H1 (cell line): ENCODE measurements at regions of chr20 and their contacts with region 1.

Region 1: DNA sequence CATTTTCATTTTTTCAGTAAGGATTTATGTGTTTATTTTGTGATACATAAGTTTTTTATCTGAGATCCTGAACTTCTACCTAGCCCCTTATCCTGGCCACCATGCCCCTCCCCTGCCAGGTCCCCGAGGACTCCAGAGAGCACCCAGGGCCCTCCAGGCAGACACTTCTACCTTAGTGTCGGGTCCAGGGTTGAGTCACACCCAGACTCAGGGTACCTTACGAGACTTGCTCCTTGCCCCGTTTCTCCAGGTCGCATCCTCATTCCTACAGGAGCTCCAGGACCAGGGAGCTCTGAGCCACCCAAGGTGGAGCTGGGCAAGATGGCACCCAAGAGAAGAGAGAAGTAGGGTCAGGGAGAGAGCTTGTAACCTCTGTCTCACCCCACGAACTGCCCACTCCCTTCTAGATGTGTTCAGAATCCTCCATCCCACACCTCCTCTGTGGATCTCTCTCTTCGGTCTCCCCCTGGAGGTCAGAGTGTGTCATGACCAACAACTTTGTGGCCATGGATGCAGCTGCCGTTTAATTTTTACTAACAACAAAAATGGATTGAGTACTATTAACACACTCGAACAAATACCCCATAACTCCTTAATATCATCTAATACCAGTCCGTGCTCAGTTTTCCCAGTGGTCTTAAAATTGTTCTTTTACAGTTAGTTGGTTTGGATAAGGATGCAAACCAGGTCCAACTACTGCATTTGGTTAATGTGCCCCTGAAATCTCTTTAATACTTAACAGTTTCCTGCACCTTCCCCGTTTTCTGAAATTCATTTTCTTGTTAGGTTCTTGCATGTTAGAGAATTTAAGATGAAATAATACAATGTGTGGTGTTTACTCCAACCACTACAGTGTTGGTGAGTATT is 130.6 kb upstream of the INSM1 start:
- DNase-seq: peak in 1 of 2 experiments; percentile 65
- H3K4me3 ChIP-seq: no peak overlapping the region
- H3K27ac ChIP-seq: no peak overlapping the region
- H3K4me1 ChIP-seq: no peaks in the 10 kb centered on the region
- H3K27me3 ChIP-seq: no peaks in the 10 kb centered on the region; a peak in 1 of 7 replicates
- CTCF ChIP-seq: peak; percentile 64 to 77 (median 77)
- EP300 ChIP-seq: no peak
- POLR2A ChIP-seq: no peak
- RAD21 ChIP-seq: peak; percentile 76 to 82

Region 2: DNA sequence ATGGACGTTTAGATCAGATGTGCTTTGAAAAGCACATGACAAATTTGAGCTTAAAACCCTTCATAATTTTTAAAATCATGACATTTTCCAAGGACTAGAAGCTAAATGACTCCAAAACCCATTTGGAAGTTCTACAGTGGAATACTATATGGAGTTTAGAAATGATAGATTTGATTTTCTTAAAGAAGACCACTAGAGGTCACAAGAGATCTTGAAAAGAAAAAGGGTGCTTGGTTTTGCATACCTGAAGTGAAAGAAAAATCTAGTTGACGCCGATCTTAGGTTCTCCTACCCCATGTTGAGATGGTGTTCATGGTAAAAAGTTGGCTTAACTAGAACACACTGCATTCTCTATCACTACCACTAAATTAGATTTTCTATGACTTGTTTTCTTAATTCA is 153.5 kb before region 1 on chr20:
- CTCF ChIA-PET with region 1: interaction called, 17 read pairs
- POLR2A ChIA-PET with region 1: no interaction called
- DNase-seq: no peak
- H3K4me3 ChIP-seq: no peak overlapping the region
- H3K27ac ChIP-seq: no peak overlapping the region
- H3K4me1 ChIP-seq: peaks cover 0 to 6% (median 5%) of the 10 kb centered on the region in 4 experiments; a peak in 3 of 7 replicates
- H3K27me3 ChIP-seq: no peaks in the 10 kb centered on the region
- CTCF ChIP-seq: peak in 2 of 3 experiments; percentile 24 to 41; a peak in 2 of 4 replicates
- EP300 ChIP-seq: no peak
- POLR2A ChIP-seq: no peak
- RAD21 ChIP-seq: peak; percentile 73 to 77

Region 3: DNA sequence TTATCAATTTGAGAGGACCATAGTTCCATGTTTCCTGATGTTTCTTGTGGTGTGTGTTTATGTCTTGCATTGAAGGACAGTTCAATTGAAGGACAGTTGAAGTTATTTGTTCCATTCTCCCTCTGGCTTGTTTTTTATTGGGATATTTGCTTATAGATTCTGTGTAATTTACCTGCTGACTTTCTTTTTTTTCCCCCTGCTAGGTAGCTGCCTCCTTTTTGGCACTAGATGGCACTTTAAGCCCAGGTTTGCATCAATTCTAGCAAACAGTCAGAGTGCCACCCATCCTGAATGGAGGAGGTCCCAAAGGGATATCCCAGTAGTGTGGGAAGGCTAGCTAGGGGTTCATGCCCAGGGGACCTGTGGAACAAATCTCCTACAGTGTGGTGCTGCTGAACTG is 106.9 kb before region 1 on chr20:
- CTCF ChIA-PET with region 1: interaction called, 10 read pairs
- POLR2A ChIA-PET with region 1: no interaction called
- DNase-seq: no peak
- H3K4me3 ChIP-seq: no peak overlapping the region
- H3K27ac ChIP-seq: no peak overlapping the region
- H3K4me1 ChIP-seq: no peaks in the 10 kb centered on the region
- H3K27me3 ChIP-seq: no peaks in the 10 kb centered on the region
- CTCF ChIP-seq: peak in 2 of 3 experiments; percentile 75; a peak in 3 of 4 replicates
- EP300 ChIP-seq: no peak
- POLR2A ChIP-seq: no peak
- RAD21 ChIP-seq: peak; percentile 91 to 92

Region 4: GRCh38 chr20:20184149-20184548 is 53.2 kb before region 1 on chr20:
- CTCF ChIA-PET with region 1: interaction called, 12 read pairs
- POLR2A ChIA-PET with region 1: no interaction called
- DNase-seq: no peak
- H3K4me3 ChIP-seq: no peak overlapping the region
- H3K27ac ChIP-seq: no peak overlapping the region
- H3K4me1 ChIP-seq: 0 out of 7 replicates have a peak, but pooled peaks cover 0 to 2% (median 0%) of the 10 kb centered on the region in 4 experiments
- H3K27me3 ChIP-seq: no peaks in the 10 kb centered on the region
- CTCF ChIP-seq: peak in 2 of 3 experiments; percentile 50 to 52; a peak in 3 of 4 replicates
- EP300 ChIP-seq: no peak
- POLR2A ChIP-seq: no peak
- RAD21 ChIP-seq: peak; percentile 37 to 57; a peak in 3 of 4 replicates

Region 5: GRCh38 chr20:20217623-20218022 is 19.7 kb before region 1 on chr20:
- CTCF ChIA-PET with region 1: interaction called, 17 read pairs
- POLR2A ChIA-PET with region 1: no interaction called
- DNase-seq: no peak
- H3K4me3 ChIP-seq: no peak overlapping the region
- H3K27ac ChIP-seq: no peak overlapping the region
- H3K4me1 ChIP-seq: no peaks in the 10 kb centered on the region
- H3K27me3 ChIP-seq: no peaks in the 10 kb centered on the region
- CTCF ChIP-seq: no peak
- EP300 ChIP-seq: no peak
- POLR2A ChIP-seq: no peak
- RAD21 ChIP-seq: no peak

Region 6: DNA sequence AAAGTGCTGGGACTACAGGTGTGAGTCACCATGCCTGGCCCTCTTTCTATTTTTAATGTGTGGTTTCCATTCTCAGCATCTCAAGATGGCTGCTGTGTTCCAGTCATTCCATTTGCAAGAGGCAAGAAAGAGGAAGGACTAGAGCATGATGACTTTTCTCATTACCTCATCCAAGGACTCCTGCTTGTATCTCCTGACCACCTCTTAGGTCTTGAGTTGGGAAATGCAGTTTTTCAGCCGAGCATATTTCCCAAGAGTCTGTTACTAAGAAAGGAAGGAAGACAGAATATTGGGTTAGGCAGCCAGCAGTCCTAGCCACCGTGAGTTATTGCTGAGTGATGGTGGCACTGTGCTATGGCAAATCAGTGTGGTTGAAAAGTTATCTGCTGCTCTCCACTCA is 22.2 kb after region 1 on chr20:
- CTCF ChIA-PET with region 1: interaction called, 88 read pairs
- POLR2A ChIA-PET with region 1: interaction called, 3 read pairs
- DNase-seq: no peak
- H3K4me3 ChIP-seq: no peak overlapping the region
- H3K27ac ChIP-seq: no peak overlapping the region
- H3K4me1 ChIP-seq: no peaks in the 10 kb centered on the region
- H3K27me3 ChIP-seq: no peaks in the 10 kb centered on the region
- CTCF ChIP-seq: no peak
- EP300 ChIP-seq: no peak
- POLR2A ChIP-seq: no peak
- RAD21 ChIP-seq: no peak

Region 7: GRCh38 chr20:20286061-20286460 is 48.7 kb after region 1 on chr20:
- CTCF ChIA-PET with region 1: no interaction called
- POLR2A ChIA-PET with region 1: no interaction called
- DNase-seq: no peak
- H3K4me3 ChIP-seq: no peak overlapping the region
- H3K27ac ChIP-seq: no peak overlapping the region
- H3K4me1 ChIP-seq: no peaks in the 10 kb centered on the region
- H3K27me3 ChIP-seq: no peaks in the 10 kb centered on the region
- CTCF ChIP-seq: no peak
- EP300 ChIP-seq: no peak
- POLR2A ChIP-seq: no peak
- RAD21 ChIP-seq: no peak

Region 8: DNA sequence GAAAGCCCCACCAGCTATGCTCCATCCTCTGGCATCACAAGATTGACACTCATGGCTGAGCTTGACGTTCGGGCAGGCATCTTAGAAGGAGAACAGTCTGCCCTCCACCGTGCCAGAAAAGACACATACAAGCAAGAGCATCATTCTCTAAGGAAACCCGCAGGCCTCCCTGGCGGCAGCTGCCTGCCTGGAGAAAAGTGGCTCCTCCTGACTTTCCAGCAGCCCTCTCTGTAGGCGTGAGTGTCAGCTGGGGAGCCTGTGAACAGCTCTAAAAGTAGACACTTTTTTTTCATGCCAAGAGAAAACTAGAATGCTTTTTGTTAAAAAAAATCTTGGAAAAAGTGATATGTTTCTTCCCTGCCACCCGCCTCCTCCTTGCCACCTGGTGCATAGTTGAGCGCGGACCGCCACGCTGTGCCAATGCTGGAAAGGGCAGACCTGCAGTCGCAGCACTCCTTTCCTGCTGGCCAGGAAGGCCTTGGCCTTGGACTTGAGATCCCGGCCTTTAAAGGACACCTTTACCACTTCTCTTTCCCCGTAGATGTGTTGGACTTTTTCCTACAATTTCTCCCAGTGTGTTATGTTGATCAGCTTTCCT is 100.9 kb after region 1 on chr20:
- CTCF ChIA-PET with region 1: no interaction called
- POLR2A ChIA-PET with region 1: no interaction called
- DNase-seq: no peak
- H3K4me3 ChIP-seq: no peak overlapping the region
- H3K27ac ChIP-seq: no peak overlapping the region
- H3K4me1 ChIP-seq: no peaks in the 10 kb centered on the region
- H3K27me3 ChIP-seq: no peaks in the 10 kb centered on the region
- CTCF ChIP-seq: no peak
- EP300 ChIP-seq: no peak
- POLR2A ChIP-seq: no peak
- RAD21 ChIP-seq: no peak